OCI-LY7 (cell line): ENCODE measurements at regions of chr14 and their contacts with region 1.

Region 1: GRCh38 chr14:106372870-106373652 is 846.7 kb downstream of the TMEM121 start:
- DNase-seq: peak; percentile 86
- H3K4me3 ChIP-seq: peak overlapping the region; percentile 60
- H3K27ac ChIP-seq: peak overlapping the region; percentile 35
- H3K4me1 ChIP-seq: peaks cover 24% of the 10 kb centered on the region
- CTCF ChIP-seq: peak; percentile 77

Region 2: GRCh38 chr14:106327234-106327633 is 45.8 kb before region 1 on chr14:
- CTCF ChIA-PET with region 1: no interaction called
- POLR2A ChIA-PET with region 1: no interaction called
- intact Hi-C with region 1: loop called (anchors 5 kb)
- DNase-seq: no peak
- H3K4me3 ChIP-seq: no peak overlapping the region
- H3K27ac ChIP-seq: no peak overlapping the region
- H3K4me1 ChIP-seq: peaks cover 36% of the 10 kb centered on the region
- CTCF ChIP-seq: no peak

Region 3: DNA sequence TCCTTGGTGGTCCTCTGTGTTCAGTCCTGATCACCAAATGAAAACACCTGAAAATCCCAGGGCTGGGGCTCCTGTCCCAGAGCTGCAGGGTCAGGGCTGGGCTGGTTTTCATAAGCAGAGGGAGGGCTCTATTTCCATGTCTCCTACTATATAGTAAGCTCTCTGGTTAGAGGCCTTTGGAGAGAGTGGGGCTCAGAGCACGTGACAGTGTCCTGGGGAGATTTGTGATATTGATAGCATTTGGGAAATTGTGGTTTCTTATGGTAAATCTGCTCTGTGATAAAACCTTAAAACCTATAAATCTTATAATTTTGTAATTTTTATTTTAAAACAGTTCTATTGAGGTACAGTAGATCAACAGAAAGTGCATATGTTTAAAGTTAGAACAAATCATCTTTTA is 355.6 kb after region 1 on chr14:
- CTCF ChIA-PET with region 1: no interaction called
- POLR2A ChIA-PET with region 1: no interaction called
- intact Hi-C with region 1: no loop called
- DNase-seq: no peak
- H3K4me3 ChIP-seq: no peak overlapping the region
- H3K27ac ChIP-seq: no peak overlapping the region
- H3K4me1 ChIP-seq: peaks cover 16% of the 10 kb centered on the region
- CTCF ChIP-seq: no peak